PC-3 (cell line): ENCODE measurements at regions of chr14 and their contacts with region 1.

Region 1: DNA sequence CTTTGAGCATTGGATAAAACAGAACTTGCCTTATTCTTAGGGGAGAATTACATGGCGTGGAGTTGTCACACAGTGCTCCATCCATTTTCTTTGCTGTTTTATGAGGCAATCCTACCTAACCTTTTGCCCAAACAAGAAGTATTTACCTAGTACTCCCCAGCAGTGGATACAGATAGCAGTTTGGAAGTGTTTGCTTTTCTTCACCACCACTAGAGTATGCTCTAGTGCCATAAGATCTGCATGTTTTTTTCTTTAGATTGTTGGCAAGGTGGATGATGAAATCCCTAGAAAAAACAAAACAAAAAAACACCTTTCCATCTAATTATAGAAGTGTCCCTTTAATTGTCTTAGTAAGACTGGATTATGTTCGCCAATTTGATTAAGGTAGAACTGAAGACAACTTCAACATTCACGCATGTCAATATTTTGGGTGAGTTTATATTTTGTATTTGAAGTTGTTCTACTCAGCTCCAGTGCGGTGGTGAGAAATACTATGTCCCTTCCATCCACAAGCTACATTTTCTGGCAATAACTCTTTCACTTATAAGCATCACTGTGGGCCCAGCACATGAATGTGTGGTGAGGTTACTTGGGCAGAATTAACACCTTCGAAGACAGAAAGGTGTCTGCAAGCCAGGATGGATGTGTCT is 23.6 kb upstream of the TMEM260 start:
- DNase-seq: peak; percentile 86
- ATAC-seq: peak; percentile 84
- H3K4me3 ChIP-seq: no peak overlapping the region
- H3K27ac ChIP-seq: no peak overlapping the region
- H3K4me1 ChIP-seq: no peaks in the 10 kb centered on the region; the same call in 1 of the 2 replicates
- H3K27me3 ChIP-seq: peaks cover 76% of the 10 kb centered on the region
- CTCF ChIP-seq: peak; percentile 99

Region 2: DNA sequence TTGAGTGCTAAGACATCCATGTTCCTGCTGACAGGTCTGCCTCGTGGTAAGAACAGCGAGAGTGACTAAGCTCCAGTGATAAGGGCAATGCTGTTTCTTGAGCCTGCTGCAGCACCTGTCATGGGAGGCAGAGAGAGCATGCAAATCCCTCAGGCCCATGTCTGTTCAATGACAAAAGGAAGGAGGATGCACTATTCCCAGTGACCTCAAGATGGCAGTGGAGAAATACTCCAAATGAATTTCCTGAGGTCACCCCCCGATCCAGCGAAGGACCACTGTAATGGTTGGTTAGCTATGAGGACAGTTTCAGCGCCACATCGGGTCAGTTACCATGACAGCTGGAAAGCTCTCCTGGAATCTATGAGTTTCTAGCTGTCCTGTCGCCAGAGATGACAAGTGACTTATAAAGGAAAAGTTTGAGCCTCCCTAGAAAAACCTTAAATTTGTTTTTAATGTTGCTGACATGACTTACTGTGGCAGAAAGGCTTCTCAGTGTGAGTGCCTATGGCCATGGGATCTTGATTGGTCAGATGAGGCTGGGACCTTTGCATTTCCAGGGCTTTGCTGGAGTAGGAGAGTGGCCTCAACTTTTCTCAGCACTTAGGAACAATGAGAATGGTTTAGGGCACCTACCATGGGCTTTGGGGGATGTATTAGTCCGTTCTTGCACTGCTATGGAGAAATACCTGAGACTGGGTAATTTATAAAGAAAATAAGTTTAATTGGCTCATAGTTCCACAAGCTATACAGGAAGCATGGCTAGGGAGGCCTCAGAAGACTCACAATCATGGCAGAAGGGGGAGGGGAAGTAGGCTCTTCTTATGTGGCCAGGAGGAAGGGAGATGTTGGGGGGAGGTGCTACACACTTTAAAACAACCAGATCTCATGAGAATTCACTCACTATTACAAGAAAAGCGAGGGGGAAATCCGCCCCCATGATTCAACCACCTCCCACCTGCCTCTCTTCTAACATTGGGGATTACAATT is 64.5 kb before region 1 on chr14:
- CTCF ChIA-PET with region 1: interaction called, 8 read pairs
- POLR2A ChIA-PET with region 1: no interaction called
- intact Hi-C with region 1: loop called (anchors 1 kb)
- DNase-seq: peak; percentile 87
- ATAC-seq: peak; percentile 72
- H3K4me3 ChIP-seq: no peak overlapping the region
- H3K27ac ChIP-seq: no peak overlapping the region
- H3K4me1 ChIP-seq: no peaks in the 10 kb centered on the region
- H3K27me3 ChIP-seq: peaks cover 45% of the 10 kb centered on the region
- CTCF ChIP-seq: peak; percentile 97

Region 3: GRCh38 chr14:56659964-56660551 is 104.0 kb after region 1 on chr14:
- CTCF ChIA-PET with region 1: no interaction called
- POLR2A ChIA-PET with region 1: no interaction called
- intact Hi-C with region 1: loop called (anchors 1 kb)
- DNase-seq: peak; percentile 82
- ATAC-seq: peak; percentile 83
- H3K4me3 ChIP-seq: no peak overlapping the region
- H3K27ac ChIP-seq: no peak overlapping the region
- H3K4me1 ChIP-seq: no peaks in the 10 kb centered on the region
- H3K27me3 ChIP-seq: peaks cover 41% of the 10 kb centered on the region
- CTCF ChIP-seq: peak; percentile 98

Region 4: DNA sequence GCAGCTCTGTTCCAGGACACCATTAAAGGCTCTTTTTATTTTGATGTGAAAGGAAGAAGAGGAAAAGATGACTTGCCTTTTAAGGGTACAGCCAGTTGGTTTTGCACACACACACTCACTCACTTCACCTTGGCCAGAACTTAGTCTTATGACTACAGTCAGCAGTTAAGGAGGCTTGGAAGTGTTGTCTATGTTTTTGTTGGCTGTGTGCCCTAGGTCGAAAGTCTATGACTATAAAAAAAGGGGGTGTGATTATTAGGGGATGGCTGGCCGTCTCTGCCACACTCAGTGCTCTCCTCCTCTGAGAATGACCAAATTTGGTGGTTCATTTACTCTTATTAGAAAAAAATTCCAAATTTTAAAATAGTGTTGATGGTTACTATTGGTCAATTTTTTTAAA is 393.8 kb after region 1 on chr14:
- CTCF ChIA-PET with region 1: interaction called, 4 read pairs
- POLR2A ChIA-PET with region 1: no interaction called
- intact Hi-C with region 1: loop called (anchors 5 kb)
- DNase-seq: no peak
- ATAC-seq: no peak
- H3K4me3 ChIP-seq: no peak overlapping the region
- H3K27ac ChIP-seq: no peak overlapping the region
- H3K4me1 ChIP-seq: no peaks in the 10 kb centered on the region
- H3K27me3 ChIP-seq: peaks cover 70% of the 10 kb centered on the region
- CTCF ChIP-seq: no peak

Region 5: DNA sequence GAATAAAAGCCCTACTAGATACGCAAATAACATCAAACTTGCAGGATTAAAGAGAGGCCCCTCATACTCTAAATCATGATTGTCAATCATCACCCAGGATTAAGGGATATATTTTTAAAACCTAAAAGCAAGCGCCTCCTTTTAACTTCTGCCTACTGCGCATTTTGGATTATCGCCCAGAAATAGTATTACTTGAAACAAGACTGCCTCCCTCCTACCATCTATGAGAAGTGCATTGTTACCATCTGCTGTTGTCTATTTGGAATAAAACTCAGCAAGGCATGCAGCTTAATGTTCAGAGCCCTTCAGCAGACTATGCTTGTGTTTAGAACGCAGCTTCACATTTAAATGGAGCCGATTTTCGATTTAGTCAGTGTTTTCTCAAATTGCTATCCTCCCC is 633.0 kb after region 1 on chr14:
- CTCF ChIA-PET with region 1: no interaction called
- POLR2A ChIA-PET with region 1: no interaction called
- intact Hi-C with region 1: loop called (anchors 5 kb)
- DNase-seq: peak; percentile 67
- ATAC-seq: peak; percentile 69
- H3K4me3 ChIP-seq: no peak overlapping the region
- H3K27ac ChIP-seq: no peak overlapping the region
- H3K4me1 ChIP-seq: no peaks in the 10 kb centered on the region
- H3K27me3 ChIP-seq: peaks cover 86% of the 10 kb centered on the region
- CTCF ChIP-seq: peak; percentile 77

Region 6: GRCh38 chr14:57317316-57317715 is 761.3 kb after region 1 on chr14:
- CTCF ChIA-PET with region 1: no interaction called
- POLR2A ChIA-PET with region 1: no interaction called
- intact Hi-C with region 1: loop called (anchors 1 kb)
- DNase-seq: peak; percentile 99
- ATAC-seq: peak; percentile 89
- H3K4me3 ChIP-seq: no peak overlapping the region
- H3K27ac ChIP-seq: no peak overlapping the region
- H3K4me1 ChIP-seq: no peaks in the 10 kb centered on the region
- H3K27me3 ChIP-seq: peaks cover 44% of the 10 kb centered on the region
- CTCF ChIP-seq: peak; percentile 100

Region 7: DNA sequence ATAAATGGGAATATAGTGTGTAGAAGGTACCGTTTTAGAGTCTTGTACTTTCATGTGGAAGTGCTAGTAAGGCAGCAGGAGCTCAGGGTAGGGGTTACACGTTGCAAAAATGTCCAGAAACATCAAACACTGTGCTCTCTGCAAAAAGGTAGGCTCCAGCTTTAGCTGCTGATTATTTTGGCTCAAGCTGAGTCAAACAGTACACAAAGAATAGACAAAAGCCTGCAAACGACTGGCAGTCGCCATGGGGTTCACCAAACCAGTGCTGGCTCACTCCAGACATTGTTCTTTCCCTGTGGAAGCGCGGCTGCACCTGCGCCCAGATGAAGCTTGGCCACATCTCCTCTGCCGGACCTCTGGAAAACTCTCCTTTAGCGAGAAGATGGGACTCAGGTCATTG is 789.1 kb after region 1 on chr14:
- CTCF ChIA-PET with region 1: no interaction called
- POLR2A ChIA-PET with region 1: no interaction called
- intact Hi-C with region 1: no loop called
- DNase-seq: peak; percentile 66
- ATAC-seq: peak; percentile 40
- H3K4me3 ChIP-seq: peak overlapping the region; percentile 40
- H3K27ac ChIP-seq: no peak overlapping the region
- H3K4me1 ChIP-seq: peaks cover 40% of the 10 kb centered on the region
- H3K27me3 ChIP-seq: no peaks in the 10 kb centered on the region
- CTCF ChIP-seq: no peak